Caco-2 (cell line): ENCODE measurements at regions of chr12 and their contacts with region 1.

Region 1: GRCh38 chr12:14567351-14568162 is at the start of gene PLBD1:
- DNase-seq: peak; percentile 73 to 78
- H3K4me3 ChIP-seq: peak within 1 kb of the TSS; percentile 50
- H3K4me3 Mint-ChIP-seq: peak within 1 kb of the TSS; percentile 75
- H3K27ac Mint-ChIP-seq: peak within 1 kb of the TSS; percentile 64
- H3K4me1 ChIP-seq: peaks cover 18% of the 10 kb centered on the region
- H3K4me1 Mint-ChIP-seq: peaks cover 5% of the 10 kb centered on the region
- H3K27me3 ChIP-seq: no peaks in the 10 kb centered on the region
- H3K27me3 Mint-ChIP-seq: no peaks in the 10 kb centered on the region
- CTCF ChIP-seq: no peak
- total RNA-seq, gene PLBD1: 21.1 and 21.4 TPM in 2 replicates

Region 2: DNA sequence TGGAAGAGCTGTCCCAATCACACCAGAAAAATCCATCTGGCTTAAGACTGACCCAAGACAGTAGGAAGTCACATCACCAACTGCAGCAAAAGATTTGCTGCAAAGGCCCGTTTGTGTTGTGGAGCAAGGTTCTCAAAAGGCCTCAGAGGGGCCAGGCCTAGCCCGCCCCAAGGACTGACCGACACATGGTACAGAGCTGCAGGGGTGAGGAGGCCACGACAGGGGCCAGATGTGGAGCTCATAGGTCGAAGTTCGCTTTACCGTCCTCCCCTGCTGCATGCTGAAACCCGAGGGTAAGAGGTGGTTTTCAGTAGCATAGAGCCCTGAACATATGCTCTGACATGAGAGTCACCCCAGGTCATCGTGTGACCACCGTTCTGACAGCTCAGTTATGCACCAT is 35.4 kb before region 1 on chr12:
- CTCF ChIA-PET with region 1: no interaction called
- POLR2A ChIA-PET with region 1: no interaction called
- intact Hi-C with region 1: loop called (anchors 2 kb)
- DNase-seq: no peak
- H3K4me3 ChIP-seq: no peak overlapping the region
- H3K4me3 Mint-ChIP-seq: no peak overlapping the region
- H3K27ac Mint-ChIP-seq: no peak overlapping the region
- H3K4me1 ChIP-seq: no peaks in the 10 kb centered on the region
- H3K4me1 Mint-ChIP-seq: peaks cover 5% of the 10 kb centered on the region
- H3K27me3 ChIP-seq: no peaks in the 10 kb centered on the region
- H3K27me3 Mint-ChIP-seq: no peaks in the 10 kb centered on the region
- CTCF ChIP-seq: no peak

Region 3: DNA sequence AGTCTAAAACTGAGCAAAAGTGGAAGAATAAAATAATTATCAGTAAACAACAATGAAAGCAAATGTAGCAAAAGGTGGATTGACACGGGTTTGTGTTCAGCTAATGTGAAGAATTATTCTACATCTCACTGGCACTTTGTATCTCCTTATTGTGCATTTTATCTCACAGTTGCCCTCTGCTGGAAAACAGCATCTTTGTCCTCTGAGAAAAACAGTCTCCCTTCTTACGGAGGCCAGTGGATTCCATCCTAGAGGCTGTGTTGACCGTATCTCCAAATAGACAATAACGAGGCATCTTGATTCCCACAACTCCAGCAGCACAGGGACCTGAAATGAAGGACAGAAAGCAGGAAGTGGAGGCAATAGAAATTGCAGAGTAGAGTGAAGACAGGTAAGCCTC is 51.4 kb after region 1 on chr12:
- CTCF ChIA-PET with region 1: interaction called, 7 read pairs
- POLR2A ChIA-PET with region 1: no interaction called
- intact Hi-C with region 1: loop called (anchors 1 kb)
- DNase-seq: peak in 1 of 2 experiments; percentile 41
- H3K4me3 ChIP-seq: no peak overlapping the region
- H3K4me3 Mint-ChIP-seq: no peak overlapping the region
- H3K27ac Mint-ChIP-seq: no peak overlapping the region
- H3K4me1 ChIP-seq: peaks cover 23% of the 10 kb centered on the region
- H3K4me1 Mint-ChIP-seq: peaks cover 10% of the 10 kb centered on the region
- H3K27me3 ChIP-seq: no peaks in the 10 kb centered on the region
- H3K27me3 Mint-ChIP-seq: no peaks in the 10 kb centered on the region
- CTCF ChIP-seq: peak in 1 of 2 experiments; percentile 27